ENCODE measurements at regions of chr7 and their contacts with region 1.

Region 1: DNA sequence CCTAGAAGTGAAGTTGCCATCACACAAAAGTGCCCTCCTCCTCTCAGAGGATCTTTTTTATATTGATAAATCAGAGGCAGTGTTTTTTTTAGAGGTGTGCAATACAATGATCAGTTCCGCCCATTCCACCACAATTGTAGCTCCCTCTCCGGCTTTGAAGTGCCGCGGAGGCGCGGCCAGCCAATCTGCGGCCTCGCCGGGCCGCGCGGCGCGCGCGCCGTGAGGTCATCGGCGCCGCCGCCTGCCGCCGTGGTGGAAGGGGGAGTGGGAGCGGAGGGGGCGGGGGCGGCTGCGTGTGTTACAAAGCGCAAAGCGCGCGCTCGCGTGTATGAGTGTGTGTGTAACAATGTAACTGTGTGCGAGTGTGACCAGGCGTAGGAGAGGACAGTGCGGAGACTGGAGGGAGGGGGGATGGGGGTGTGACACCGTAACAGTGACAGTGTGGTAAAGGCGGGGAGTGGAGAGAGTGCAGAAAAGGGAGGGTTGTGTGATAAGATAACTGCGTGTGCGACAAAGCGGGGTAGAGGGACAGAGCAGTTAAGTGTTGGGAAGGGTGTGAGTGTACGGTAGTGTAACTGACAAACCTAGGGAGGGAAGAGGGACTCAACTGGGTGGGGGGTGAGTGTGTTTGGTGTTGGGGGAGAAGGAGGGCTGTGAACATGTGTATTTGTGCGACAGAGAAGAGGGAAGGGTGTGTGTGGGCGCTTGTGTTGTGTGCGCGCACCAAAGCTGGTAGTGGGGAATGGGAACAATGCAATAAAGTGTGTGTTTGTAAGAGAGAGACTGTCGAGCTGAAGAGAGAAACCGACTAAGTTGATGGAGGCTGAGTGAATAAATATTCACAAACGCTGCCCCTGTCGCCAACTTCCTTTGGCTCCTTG is at the start of gene SP8:
- DNase-seq: no peak
- H3K4me3 Mint-ChIP-seq: peak within 1 kb of the TSS; percentile 38
- H3K27ac Mint-ChIP-seq: peak within 1 kb of the TSS; percentile 59
- H3K4me1 Mint-ChIP-seq: peaks cover 15% of the 10 kb centered on the region
- H3K27me3 Mint-ChIP-seq: peaks cover 74% of the 10 kb centered on the region
- total RNA-seq, gene SP8: not detected in 2 replicates

Region 2: DNA sequence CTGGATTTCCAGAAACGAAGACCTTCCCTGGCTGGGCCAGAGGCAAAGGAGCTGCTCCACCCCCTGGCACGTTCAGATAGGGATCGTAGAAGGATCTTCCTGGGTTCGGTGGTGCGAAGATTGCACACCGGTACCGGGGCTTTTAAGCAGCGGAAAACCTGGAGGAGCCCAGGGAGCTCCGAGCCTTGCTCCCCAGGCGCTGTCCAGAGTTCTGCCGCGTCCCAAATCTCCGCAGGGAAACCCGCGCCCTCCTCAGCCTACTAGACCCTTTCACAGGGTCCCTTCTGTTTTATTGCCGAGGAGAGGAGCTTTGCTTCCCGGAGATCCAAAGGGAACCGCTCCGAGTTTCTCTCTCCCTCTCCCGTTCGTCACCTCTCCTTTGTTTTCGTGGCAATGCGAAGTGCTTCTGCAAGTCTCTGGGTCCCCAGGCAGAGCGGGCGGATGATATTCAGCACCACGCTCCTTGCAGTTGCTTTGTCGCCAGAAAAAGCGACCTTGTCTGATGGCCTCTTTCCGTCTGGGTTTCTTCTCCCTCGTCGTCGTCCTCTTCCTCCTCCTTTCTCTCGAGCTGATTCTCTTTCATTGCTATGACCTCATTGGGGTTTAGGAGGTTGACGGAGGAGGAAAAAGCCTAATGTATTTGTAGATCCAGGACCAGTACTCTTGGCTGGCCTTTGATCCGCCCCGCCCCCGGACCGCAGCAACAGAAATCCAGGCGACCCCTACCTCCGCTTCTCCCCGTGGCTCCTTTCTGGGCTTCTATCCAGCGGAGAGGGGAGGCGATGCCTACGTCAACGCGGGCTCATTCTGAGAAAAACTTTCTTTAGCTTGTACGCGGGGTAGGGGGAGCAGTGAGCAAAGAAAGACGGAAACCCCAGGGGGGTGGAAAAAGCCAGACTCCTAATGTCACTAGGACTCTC is 1013.9 kb before region 1 on chr7 and contains the start of gene TMEM196:
- intact Hi-C with region 1: loop called (anchors 10 kb)
- DNase-seq: no peak
- H3K4me3 Mint-ChIP-seq: no peak within 1 kb of the TSS
- H3K27ac Mint-ChIP-seq: no peak within 1 kb of the TSS
- H3K4me1 Mint-ChIP-seq: peaks cover 5% of the 10 kb centered on the region
- H3K27me3 Mint-ChIP-seq: peaks cover 28% of the 10 kb centered on the region
- total RNA-seq, gene TMEM196: not detected in 2 replicates

Region 3: DNA sequence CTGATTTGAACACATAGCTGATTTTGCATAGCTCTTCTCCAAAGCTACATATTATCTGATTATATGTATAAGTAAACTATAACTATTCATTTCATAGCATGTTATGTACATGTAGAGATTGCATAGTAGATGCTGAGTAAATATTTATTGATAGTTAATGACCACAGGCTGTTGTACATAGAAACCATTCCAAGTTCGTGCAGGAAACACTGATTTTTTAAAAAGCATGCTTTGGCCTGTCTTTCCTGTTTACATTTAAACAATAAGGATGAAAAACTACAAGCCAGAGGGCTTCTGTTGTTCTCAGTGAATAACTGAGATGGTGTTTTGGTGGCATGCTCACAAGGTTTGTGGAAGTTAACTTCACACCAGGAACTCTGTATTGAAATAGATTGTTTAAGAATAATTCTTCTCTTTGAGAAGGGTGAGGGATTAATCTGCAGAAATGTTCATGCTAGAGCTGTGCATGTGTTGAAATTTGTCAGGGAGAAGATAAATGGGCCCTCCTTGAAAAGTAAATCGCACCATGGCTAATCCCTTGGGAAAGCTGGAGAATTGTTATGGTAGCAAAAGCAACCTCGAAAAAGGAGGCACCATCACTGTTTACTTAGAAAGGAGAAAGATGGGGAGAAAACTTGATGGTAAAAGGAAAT is 119.9 kb after region 1 on chr7:
- intact Hi-C with region 1: no loop called
- DNase-seq: no peak
- H3K4me3 Mint-ChIP-seq: no peak overlapping the region
- H3K27ac Mint-ChIP-seq: no peak overlapping the region
- H3K4me1 Mint-ChIP-seq: no peaks in the 10 kb centered on the region
- H3K27me3 Mint-ChIP-seq: no peaks in the 10 kb centered on the region

Measured in activated T-helper 2 cell treated with anti-CD3 and anti-CD28 coated beads, Interferon-gamma antibody, Interleukin-2, Interleukin-4, amounts not matched to agents 10 μg/mL and 5 μg/mL and 100 μg/mL, durations not matched to agents 14 hours and 24 hours and 36 hours (primary cell).